ENCODE measurements at regions of chr9 and their contacts with region 1.

Region 1: DNA sequence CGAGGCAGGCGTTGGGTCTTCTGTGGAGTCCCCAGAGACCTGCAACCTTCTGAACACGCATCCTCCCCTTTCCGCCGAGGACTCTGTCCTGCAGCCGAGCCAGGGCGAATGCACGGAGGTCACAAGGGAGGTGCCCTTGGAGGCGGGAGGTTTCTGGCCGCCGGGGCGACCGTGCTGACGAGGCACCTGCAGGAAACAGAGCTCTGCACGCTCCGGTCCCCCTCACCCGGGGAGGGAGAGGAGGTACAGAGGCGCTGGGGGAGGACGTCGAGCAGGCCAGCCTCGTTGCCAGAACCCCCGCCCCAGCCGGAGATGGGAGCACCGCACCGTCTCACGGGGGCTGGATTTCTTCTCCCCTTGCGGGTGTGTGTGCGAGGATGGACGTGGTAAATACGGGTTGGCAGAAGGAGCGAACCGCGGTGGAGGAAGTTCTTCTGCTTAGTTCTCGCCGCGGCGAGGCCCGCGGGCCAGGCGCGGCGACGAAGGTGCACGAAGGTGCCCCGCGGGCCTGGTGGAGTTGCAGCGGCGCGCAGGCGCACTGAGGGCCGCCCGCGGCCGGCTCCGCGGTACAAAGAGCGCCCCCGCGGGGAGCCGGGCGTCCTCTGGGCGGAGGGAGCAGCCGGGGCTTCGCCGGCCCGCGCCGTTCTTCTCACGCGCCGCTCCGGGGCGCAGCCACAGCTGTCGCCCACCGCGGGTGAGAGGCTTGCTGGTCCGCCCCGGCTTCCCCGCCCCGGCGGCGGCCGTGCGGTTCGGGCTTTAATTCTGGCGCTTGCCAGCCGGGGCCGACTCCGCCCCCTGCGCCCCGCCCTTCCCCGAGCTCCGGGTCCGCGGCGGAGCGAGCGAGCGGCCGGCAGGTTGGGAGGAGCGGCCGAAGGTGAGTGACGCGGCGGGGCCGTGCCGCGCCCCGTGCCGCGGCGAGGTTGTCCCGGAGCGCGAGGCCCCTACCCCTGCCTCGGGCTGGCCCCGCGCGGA is 289.5 kb downstream of the DOCK8 start:
- DNase-seq: peak; percentile 72
- H3K4me3 Mint-ChIP-seq: peak within 1 kb of the TSS; percentile 80
- H3K27ac Mint-ChIP-seq: peak within 1 kb of the TSS; percentile 81
- H3K4me1 Mint-ChIP-seq: peaks cover 31% of the 10 kb centered on the region
- H3K27me3 Mint-ChIP-seq: no peaks in the 10 kb centered on the region

Region 2: GRCh38 chr9:278651-279050 is 225.5 kb before region 1 on chr9:
- CTCF ChIA-PET with region 1: no interaction called
- intact Hi-C with region 1: loop called (anchors 5 kb)
- DNase-seq: peak; percentile 78
- H3K4me3 Mint-ChIP-seq: no peak overlapping the region
- H3K27ac Mint-ChIP-seq: no peak overlapping the region
- H3K4me1 Mint-ChIP-seq: peaks cover 42% of the 10 kb centered on the region
- H3K27me3 Mint-ChIP-seq: no peaks in the 10 kb centered on the region

Region 3: GRCh38 chr9:336039-336438 is 168.1 kb before region 1 on chr9:
- CTCF ChIA-PET with region 1: no interaction called
- intact Hi-C with region 1: no loop called
- DNase-seq: no peak
- H3K4me3 Mint-ChIP-seq: no peak overlapping the region
- H3K27ac Mint-ChIP-seq: no peak overlapping the region
- H3K4me1 Mint-ChIP-seq: peaks cover 7% of the 10 kb centered on the region
- H3K27me3 Mint-ChIP-seq: no peaks in the 10 kb centered on the region

Region 4: GRCh38 chr9:447230-448025 is 56.7 kb before region 1 on chr9:
- CTCF ChIA-PET with region 1: no interaction called
- intact Hi-C with region 1: loop called (anchors 1 kb)
- DNase-seq: peak; percentile 89
- H3K4me3 Mint-ChIP-seq: no peak overlapping the region
- H3K27ac Mint-ChIP-seq: peak overlapping the region; percentile 57
- H3K4me1 Mint-ChIP-seq: peaks cover 23% of the 10 kb centered on the region
- H3K27me3 Mint-ChIP-seq: no peaks in the 10 kb centered on the region

Region 5: DNA sequence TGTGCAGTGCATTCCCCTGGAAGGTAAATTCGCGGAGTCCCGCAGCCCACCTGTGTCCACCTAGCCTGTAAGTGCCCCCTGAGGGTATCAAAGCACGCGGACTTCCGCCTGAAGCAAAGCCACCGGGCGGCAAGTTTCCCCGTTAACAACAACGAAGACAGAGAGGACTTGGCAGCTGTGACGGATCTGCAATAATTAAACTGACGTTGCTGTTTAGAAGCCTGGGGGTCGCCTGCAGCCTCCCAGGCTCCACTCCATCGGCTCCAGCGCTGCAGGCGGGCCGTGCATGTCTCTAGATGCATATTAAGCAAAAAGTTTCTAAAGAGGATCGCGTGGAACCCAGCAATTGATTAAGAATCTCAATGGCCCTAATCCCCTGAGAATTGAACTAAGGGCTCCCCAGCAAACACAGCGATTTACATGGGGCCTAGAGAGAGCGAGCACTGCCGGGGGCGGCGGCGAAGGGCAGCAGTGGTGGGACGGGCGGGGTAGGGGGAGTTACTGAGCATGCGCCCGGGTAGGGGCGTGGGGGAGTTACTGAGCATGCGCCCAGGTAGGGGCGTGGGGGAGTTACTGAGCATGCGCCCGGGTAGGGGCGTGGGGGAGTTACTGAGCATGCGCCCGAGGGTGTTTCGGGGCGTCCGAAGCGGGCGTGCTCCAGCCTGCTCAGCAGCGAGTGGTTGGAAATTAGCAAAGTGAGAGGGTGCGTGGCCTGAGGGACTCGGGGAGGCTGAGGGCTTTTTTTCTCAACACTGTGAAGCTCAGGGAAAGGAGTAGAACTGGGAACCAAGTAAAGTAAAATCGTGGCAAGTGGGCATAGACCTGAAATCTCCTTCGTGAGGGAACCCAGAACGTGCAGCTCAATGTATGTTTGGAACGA is 34.3 kb before region 1 on chr9:
- CTCF ChIA-PET with region 1: interaction called, 7 read pairs
- intact Hi-C with region 1: loop called (anchors 1 kb)
- DNase-seq: peak; percentile 92
- H3K4me3 Mint-ChIP-seq: peak overlapping the region; percentile 92
- H3K27ac Mint-ChIP-seq: peak overlapping the region; percentile 71
- H3K4me1 Mint-ChIP-seq: peaks cover 20% of the 10 kb centered on the region
- H3K27me3 Mint-ChIP-seq: no peaks in the 10 kb centered on the region

Region 6: GRCh38 chr9:517993-518392 is 13.8 kb after region 1 on chr9:
- CTCF ChIA-PET with region 1: interaction called, 3 read pairs
- intact Hi-C with region 1: loop called (anchors 1 kb)
- DNase-seq: no peak
- H3K4me3 Mint-ChIP-seq: peak overlapping the region; percentile 69
- H3K27ac Mint-ChIP-seq: peak overlapping the region; percentile 73
- H3K4me1 Mint-ChIP-seq: peaks cover 78% of the 10 kb centered on the region
- H3K27me3 Mint-ChIP-seq: no peaks in the 10 kb centered on the region

Region 7: GRCh38 chr9:536597-537511 is 32.7 kb after region 1 on chr9:
- CTCF ChIA-PET with region 1: no interaction called
- intact Hi-C with region 1: loop called (anchors 2 kb)
- DNase-seq: no peak
- H3K4me3 Mint-ChIP-seq: peak overlapping the region; percentile 65
- H3K27ac Mint-ChIP-seq: peak overlapping the region; percentile 72
- H3K4me1 Mint-ChIP-seq: peaks cover 55% of the 10 kb centered on the region
- H3K27me3 Mint-ChIP-seq: no peaks in the 10 kb centered on the region

Region 8: GRCh38 chr9:546797-547223 is 42.6 kb after region 1 on chr9:
- CTCF ChIA-PET with region 1: no interaction called
- intact Hi-C with region 1: loop called (anchors 2 kb)
- DNase-seq: no peak
- H3K4me3 Mint-ChIP-seq: peak overlapping the region; percentile 13
- H3K27ac Mint-ChIP-seq: peak overlapping the region; percentile 17
- H3K4me1 Mint-ChIP-seq: peaks cover 28% of the 10 kb centered on the region
- H3K27me3 Mint-ChIP-seq: no peaks in the 10 kb centered on the region

Measured in activated naive CD4-positive, alpha-beta T cell treated with anti-CD3 and anti-CD28 coated beads for 36 hours (primary cell).